Right cardiac atrium (tissue), 5 donors: ENCODE measurements at regions of chr11 and their contacts with region 1.

Region 1: DNA sequence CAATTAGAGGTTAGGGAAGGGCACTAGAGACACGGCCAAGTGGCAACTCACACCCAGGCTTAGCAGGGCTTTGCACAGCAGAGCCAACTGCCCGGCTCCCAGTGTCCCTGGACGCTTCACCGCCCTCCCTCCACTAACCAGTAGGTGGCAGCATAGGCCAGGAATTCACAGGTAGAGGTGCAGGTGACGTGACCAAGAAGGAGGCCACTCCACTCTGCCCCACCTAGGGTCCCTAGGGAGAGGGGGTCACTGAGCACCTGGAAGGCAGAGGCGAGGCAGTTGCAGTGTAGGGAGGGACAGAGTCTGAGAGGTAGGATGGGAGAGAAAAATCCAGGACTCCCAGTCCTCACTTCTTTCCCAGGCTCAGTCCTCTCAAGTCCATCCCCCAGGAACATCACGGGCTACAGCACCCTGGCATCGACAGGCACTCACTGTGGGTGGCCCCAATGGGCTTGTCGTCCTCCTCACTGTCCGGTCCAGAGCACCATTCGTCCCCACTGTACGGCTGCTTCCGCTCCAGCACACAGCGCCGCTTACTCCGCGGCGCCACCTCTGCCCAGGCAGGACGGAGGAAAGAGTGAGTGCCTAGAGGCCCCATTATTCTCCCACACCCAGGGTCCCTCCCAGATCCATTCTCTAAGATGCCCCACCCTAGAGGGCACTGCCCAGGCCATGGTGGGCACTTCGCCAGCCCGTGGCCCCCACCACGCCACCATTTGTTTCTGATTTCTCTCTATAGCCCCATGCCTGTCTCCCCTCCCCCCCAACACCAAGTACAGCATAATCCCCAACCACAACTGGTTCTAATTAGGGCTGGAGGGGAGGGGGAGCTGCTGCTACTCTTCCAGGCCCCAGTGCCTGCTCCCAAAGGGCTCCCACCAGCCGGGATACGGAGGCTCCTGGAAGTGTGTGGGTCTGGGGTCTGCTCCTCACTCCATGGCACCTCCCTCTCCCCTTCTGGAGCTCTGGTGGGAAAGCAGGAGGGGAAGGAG is 18.4 kb downstream of the BCL9L start:
- DNase-seq: peak; percentile 80 to 91 (median 91)
- ATAC-seq: peak; percentile 50 to 64
- H3K4me3 ChIP-seq: no peak overlapping the region
- H3K27ac ChIP-seq: peak overlapping the region; percentile 31
- H3K4me1 ChIP-seq: peaks cover 27% of the 10 kb centered on the region
- H3K27me3 ChIP-seq: no peaks in the 10 kb centered on the region

Region 2: DNA sequence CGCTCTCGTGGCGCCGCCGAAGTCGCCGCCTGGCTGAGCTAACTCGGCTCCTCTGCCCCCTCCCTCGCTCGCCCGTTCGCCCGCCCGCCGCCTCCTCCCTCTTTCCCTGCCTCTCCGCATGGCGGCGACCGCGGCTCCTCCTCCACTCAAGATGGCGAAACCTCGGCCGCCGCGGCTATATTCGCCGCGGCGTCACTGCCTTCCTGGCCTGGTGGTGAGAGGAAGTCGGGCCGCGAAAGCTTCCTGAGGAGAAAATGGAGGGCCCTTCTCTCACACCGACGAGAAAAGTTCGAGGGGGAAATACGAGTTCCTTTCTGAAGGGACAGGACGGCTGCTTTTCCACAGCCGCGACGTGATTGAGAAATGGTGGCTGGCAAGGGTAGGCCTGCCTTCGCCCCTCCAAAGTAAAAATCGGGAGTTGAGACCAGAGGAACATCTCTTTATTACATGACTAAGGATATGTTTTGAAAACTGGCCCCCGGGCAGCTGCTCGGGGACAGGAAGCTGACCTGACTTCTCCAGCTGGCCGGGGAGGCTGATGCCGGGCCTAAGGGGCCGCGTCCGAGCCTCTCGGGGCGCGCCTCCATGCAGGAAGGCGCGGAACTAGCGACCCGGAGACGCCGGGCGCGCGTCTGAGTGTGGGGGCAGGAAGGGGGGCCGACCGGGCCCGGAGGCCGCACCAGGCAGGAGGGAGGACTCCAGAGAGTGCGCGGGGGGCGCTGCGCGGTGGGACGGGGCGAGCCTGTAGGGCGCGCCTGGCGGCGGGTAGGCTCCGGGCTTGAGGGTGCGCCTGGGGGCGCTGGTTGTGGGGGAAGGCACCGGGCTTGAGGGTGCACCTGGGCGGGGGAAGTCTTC is 116.0 kb before region 1 on chr11 and contains the start of gene DDX6:
- intact Hi-C with region 1: loop called in 1 of 4 experiments (anchors 10 kb)
- DNase-seq: peak; percentile 93 to 97 (median 97)
- ATAC-seq: peak; percentile 86 to 87
- H3K4me3 ChIP-seq: peak within 1 kb of the TSS; percentile 88
- H3K27ac ChIP-seq: peak within 1 kb of the TSS; percentile 100
- H3K4me1 ChIP-seq: peaks cover 3% of the 10 kb centered on the region
- H3K27me3 ChIP-seq: no peaks in the 10 kb centered on the region
- total RNA-seq, gene DDX6: 126 to 149 (median 139) TPM

Region 3: DNA sequence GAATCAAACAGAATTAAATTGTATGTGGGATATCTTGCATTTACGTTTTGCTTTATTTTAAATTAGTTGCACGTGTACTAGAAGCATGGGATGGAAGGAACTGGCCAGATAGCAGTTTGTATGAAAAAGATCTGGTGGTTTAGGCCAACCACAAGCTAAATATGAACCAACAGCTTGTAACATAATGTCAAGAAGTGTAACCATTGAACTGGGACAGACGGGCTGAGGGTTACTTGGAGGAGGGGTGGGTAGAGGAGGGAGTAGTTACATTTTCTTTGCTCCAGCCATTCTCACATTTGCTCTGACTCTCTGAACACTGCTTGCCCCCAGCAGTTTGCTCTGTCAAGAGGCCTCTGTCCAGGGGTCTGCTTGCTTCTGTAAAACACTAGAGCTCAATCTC is 55.4 kb before region 1 on chr11:
- intact Hi-C with region 1: no loop called
- DNase-seq: no peak
- ATAC-seq: no peak
- H3K4me3 ChIP-seq: no peak overlapping the region
- H3K27ac ChIP-seq: no peak overlapping the region
- H3K4me1 ChIP-seq: no peaks in the 10 kb centered on the region
- H3K27me3 ChIP-seq: no peaks in the 10 kb centered on the region

Region 4: GRCh38 chr11:118921929-118922744 is 14.8 kb after region 1 on chr11:
- intact Hi-C with region 1: loop called in 1 of 4 experiments (anchors 2 kb)
- DNase-seq: peak; percentile 91 to 96 (median 96)
- ATAC-seq: peak; percentile 59 to 71
- H3K4me3 ChIP-seq: peak overlapping the region; percentile 64
- H3K27ac ChIP-seq: peak overlapping the region; percentile 90
- H3K4me1 ChIP-seq: peaks cover 22% of the 10 kb centered on the region
- H3K27me3 ChIP-seq: no peaks in the 10 kb centered on the region

Region 5: GRCh38 chr11:118928108-118928870 is 20.9 kb after region 1 on chr11:
- intact Hi-C with region 1: loop called in 3 of 4 experiments (anchors 2 kb)
- DNase-seq: peak; percentile 92 to 95 (median 95)
- ATAC-seq: peak; percentile 79 to 82
- H3K4me3 ChIP-seq: peak overlapping the region; percentile 94
- H3K27ac ChIP-seq: peak overlapping the region; percentile 99
- H3K4me1 ChIP-seq: peaks cover 2% of the 10 kb centered on the region
- H3K27me3 ChIP-seq: no peaks in the 10 kb centered on the region

Region 6: GRCh38 chr11:118956094-118956846 is 48.9 kb after region 1 on chr11 and contains the start of gene UPK2:
- intact Hi-C with region 1: loop called in 2 of 4 experiments (anchors 2 to 10 kb)
- DNase-seq: peak; percentile 88 to 96 (median 95)
- ATAC-seq: peak; percentile 95 to 96
- H3K4me3 ChIP-seq: no peak within 1 kb of the TSS
- H3K27ac ChIP-seq: no peak within 1 kb of the TSS
- H3K4me1 ChIP-seq: no peaks in the 10 kb centered on the region
- H3K27me3 ChIP-seq: no peaks in the 10 kb centered on the region
- total RNA-seq, gene UPK2: not detected

Region 7: DNA sequence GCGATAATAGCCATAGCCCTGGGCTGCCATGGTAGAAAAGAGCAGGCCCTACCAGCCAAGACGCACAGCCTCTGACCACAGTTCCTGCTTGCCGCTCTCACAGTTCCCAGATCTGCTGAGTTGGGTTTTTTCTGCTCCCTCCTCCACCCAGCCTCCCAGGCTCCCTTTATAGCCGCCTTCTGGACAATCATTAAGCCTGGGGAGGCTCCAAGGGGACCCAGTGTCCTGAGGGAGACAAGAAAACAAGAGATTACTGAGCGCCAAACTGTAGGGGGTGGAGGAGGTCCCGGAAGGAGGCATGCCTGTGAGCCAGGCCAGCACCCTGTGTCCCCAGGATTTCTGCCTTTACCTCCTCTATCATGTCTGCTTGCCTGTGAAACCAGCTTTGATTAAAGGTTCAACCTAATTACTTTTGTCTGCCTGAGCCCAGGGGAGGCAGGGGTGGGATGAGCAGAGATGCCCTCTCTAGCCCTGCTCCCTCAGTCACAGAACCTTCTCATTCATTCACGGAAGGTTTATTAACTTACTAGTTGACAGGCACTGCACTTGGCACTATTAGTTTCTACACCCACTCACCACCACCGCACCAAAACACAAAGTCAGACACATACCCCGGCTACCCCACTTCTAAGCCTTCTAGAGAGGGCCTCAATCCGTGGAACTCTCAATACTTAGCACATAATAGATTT is 122.1 kb after region 1 on chr11:
- intact Hi-C with region 1: loop called in 1 of 4 experiments (anchors 10 kb)
- DNase-seq: peak in 1 of 3 donors; percentile 64
- ATAC-seq: no peak
- H3K4me3 ChIP-seq: no peak overlapping the region
- H3K27ac ChIP-seq: no peak overlapping the region
- H3K4me1 ChIP-seq: peaks cover 4% of the 10 kb centered on the region
- H3K27me3 ChIP-seq: no peaks in the 10 kb centered on the region